Activated CD4-positive, alpha-beta memory T cell treated with anti-CD3 and anti-CD28 coated beads for 36 hours (primary cell): ENCODE measurements at regions of chr2 and their contacts with region 1.

Region 1: GRCh38 chr2:7943446-7943845 is 738.4 kb upstream of the ID2 start:
- DNase-seq: no peak
- H3K4me3 Mint-ChIP-seq: no peak overlapping the region
- H3K27ac Mint-ChIP-seq: no peak overlapping the region
- H3K4me1 Mint-ChIP-seq: peaks cover 21% of the 10 kb centered on the region
- H3K27me3 Mint-ChIP-seq: no peaks in the 10 kb centered on the region

Region 2: GRCh38 chr2:7577769-7578168 is 365.7 kb before region 1 on chr2:
- CTCF ChIA-PET with region 1: no interaction called
- POLR2A ChIA-PET with region 1: no interaction called
- intact Hi-C with region 1: no loop called
- DNase-seq: no peak
- H3K4me3 Mint-ChIP-seq: no peak overlapping the region
- H3K27ac Mint-ChIP-seq: no peak overlapping the region
- H3K4me1 Mint-ChIP-seq: peaks cover 4% of the 10 kb centered on the region
- H3K27me3 Mint-ChIP-seq: no peaks in the 10 kb centered on the region

Region 3: GRCh38 chr2:7900593-7900992 is 42.9 kb before region 1 on chr2:
- CTCF ChIA-PET with region 1: no interaction called
- POLR2A ChIA-PET with region 1: no interaction called
- intact Hi-C with region 1: no loop called
- DNase-seq: no peak
- H3K4me3 Mint-ChIP-seq: no peak overlapping the region
- H3K27ac Mint-ChIP-seq: no peak overlapping the region
- H3K4me1 Mint-ChIP-seq: peaks cover 8% of the 10 kb centered on the region
- H3K27me3 Mint-ChIP-seq: peaks cover 2% of the 10 kb centered on the region

Region 4: GRCh38 chr2:7984693-7985353 is 41.4 kb after region 1 on chr2:
- CTCF ChIA-PET with region 1: no interaction called
- POLR2A ChIA-PET with region 1: interaction called, 3 read pairs
- intact Hi-C with region 1: loop called (anchors 1 kb)
- DNase-seq: no peak
- H3K4me3 Mint-ChIP-seq: no peak overlapping the region
- H3K27ac Mint-ChIP-seq: peak overlapping the region; percentile 66
- H3K4me1 Mint-ChIP-seq: peaks cover 28% of the 10 kb centered on the region
- H3K27me3 Mint-ChIP-seq: peaks cover 5% of the 10 kb centered on the region